ENCODE measurements at regions of chr17 and their contacts with region 1.

Region 1: GRCh38 chr17:40362696-40363110 is 1.8 kb downstream of the GJD3 start:
- DNase-seq: peak in 1 of 2 donors; percentile 94
- H3K4me3 ChIP-seq: peak overlapping the region; percentile 28
- CTCF ChIP-seq: no peak
- POLR2A ChIP-seq: no peak

Region 2: DNA sequence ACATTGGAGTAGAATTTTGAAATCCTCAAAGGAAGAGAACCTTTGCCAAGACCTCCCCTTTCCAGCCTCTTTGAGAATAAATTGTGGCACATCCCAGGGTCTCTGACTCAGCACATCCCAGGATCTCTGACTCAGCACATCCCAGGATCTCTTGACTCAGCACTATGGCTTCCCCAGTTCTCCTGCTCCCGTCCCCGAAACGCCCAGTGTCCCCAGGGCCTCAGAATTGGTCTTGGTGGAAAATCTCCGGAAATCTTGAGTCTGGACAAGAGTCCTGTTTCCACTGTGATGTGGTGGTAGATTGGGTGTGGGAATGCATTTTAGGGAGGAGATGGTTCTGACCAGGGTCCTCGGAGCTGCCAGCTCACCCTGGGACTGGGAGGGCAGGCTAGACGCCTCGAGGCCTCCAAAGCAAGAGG is 1230.5 kb before region 1 on chr17:
- intact Hi-C with region 1: no loop called
- DNase-seq: no peak
- H3K4me3 ChIP-seq: no peak overlapping the region
- CTCF ChIP-seq: no peak
- POLR2A ChIP-seq: no peak

Region 3: DNA sequence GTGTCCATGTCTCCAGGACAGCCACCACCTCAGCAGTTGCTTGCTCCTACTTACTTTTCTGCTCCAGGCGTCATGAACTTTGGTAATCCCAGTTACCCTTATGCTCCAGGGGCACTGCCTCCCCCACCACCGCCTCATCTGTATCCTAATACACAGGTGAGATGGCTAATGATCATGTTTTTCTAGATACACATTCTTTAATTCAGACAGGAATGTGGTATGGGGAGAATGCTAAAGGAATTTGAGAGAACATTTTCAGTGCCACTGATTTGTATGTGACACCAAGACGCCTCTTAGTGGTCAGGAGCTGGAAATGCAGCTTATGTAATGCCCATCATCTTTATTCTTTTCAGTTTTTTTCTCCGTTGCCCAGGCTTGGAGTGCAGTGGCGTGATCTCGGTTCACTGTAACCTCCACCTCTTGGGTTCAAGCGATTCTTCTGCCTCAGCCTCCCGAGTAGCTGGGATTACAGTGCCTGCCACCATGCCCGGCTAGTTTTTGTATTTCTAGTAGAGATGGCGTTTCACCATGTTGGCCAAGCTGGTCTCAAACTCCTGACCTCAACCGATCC is 194.4 kb before region 1 on chr17:
- intact Hi-C with region 1: no loop called
- DNase-seq: peak in 1 of 2 donors; percentile 37
- H3K4me3 ChIP-seq: no peak overlapping the region
- CTCF ChIP-seq: peak in 1 of 3 donors; percentile 74
- POLR2A ChIP-seq: no peak

Region 4: GRCh38 chr17:40209404-40210093 is 153.2 kb before region 1 on chr17:
- intact Hi-C with region 1: loop called (anchors 10 kb)
- DNase-seq: no peak
- H3K4me3 ChIP-seq: no peak overlapping the region
- CTCF ChIP-seq: no peak
- POLR2A ChIP-seq: no peak

Region 5: DNA sequence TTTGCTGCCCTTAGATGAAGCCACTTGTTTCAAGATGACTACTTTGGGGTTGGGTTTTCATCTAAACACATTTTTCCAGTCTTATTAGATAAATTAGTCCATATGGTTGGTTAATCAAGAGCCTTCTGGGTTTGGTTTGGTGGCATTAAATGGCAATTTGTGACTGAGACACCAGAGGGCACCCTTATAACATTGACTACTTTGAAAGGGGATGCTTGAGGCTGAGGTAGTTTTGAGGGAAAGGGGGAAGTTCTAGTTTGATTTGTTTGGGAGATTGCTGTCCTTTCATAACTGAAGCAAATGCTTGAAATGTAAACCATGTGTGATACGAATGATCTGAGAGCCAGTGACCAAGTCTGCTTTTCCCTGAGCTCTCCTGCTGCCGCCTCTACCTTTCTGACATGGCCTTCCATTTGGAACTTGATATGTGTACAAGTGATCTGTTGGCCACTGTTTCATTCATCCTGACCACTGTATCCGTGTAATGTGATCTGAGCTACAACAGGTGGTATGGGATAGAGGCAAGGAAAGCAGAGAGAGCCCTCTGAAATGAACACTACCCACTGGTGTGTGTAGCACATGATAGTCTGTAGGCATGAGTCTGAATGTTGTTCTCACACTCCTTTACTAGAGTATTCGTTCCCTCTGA is 59.6 kb before region 1 on chr17:
- intact Hi-C with region 1: no loop called
- DNase-seq: peak in 1 of 2 donors; percentile 74
- H3K4me3 ChIP-seq: no peak overlapping the region
- CTCF ChIP-seq: peak in 2 of 3 donors; percentile 0 to 57
- POLR2A ChIP-seq: no peak

Region 6: GRCh38 chr17:40417609-40418427 is 55.1 kb after region 1 on chr17 and contains the start of gene TOP2A:
- intact Hi-C with region 1: loop called (anchors 10 kb)
- DNase-seq: peak; percentile 99 to 100
- H3K4me3 ChIP-seq: peak within 1 kb of the TSS; percentile 30
- CTCF ChIP-seq: no peak
- POLR2A ChIP-seq: no peak
- total RNA-seq, gene TOP2A: 5.7 to 11.9 (median 8.2) TPM

Region 7: GRCh38 chr17:40531051-40531991 is 168.6 kb after region 1 on chr17:
- intact Hi-C with region 1: loop called (anchors 5 kb)
- DNase-seq: peak in 1 of 2 donors; percentile 85
- H3K4me3 ChIP-seq: no peak overlapping the region
- CTCF ChIP-seq: no peak
- POLR2A ChIP-seq: no peak

Region 8: GRCh38 chr17:40559954-40560591 is 197.4 kb after region 1 on chr17:
- intact Hi-C with region 1: loop called (anchors 10 kb)
- DNase-seq: peak; percentile 91 to 99
- H3K4me3 ChIP-seq: no peak overlapping the region
- CTCF ChIP-seq: peak in 1 of 3 donors; percentile 97
- POLR2A ChIP-seq: no peak